HCT116 (cell line): ENCODE measurements at regions of chr2 and their contacts with region 1.

Region 1: DNA sequence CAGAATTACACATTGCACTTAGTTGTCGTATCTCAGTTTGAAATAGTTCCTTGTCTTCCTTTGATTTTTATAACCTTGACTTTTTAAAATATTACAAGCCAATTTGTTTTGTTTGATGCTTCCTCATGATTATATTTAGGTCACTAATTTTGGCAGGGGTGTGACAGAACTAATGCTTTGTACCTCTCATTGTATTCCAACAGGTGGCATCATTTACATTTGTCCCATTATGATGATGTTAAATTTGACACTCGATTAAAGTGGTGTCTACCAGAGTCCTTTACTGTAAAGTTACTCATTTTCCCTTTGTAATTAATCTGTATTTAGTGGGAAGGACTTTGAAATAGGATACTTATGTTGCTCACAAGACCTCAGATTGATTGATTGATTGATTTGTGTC is 21.5 kb upstream of the MFSD2B start:
- DNase-seq: no peak
- ATAC-seq: peak; percentile 78
- H3K4me3 ChIP-seq: no peak overlapping the region
- H3K27ac ChIP-seq: no peak overlapping the region
- H3K4me1 ChIP-seq: no peaks in the 10 kb centered on the region
- H3K27me3 ChIP-seq: no peaks in the 10 kb centered on the region
- CTCF ChIP-seq: peak; percentile 39 to 57 (median 56); a peak in 4 of 6 replicates
- POLR2A ChIP-seq: no peak
- RAD21 ChIP-seq: peak; percentile 66

Region 2: DNA sequence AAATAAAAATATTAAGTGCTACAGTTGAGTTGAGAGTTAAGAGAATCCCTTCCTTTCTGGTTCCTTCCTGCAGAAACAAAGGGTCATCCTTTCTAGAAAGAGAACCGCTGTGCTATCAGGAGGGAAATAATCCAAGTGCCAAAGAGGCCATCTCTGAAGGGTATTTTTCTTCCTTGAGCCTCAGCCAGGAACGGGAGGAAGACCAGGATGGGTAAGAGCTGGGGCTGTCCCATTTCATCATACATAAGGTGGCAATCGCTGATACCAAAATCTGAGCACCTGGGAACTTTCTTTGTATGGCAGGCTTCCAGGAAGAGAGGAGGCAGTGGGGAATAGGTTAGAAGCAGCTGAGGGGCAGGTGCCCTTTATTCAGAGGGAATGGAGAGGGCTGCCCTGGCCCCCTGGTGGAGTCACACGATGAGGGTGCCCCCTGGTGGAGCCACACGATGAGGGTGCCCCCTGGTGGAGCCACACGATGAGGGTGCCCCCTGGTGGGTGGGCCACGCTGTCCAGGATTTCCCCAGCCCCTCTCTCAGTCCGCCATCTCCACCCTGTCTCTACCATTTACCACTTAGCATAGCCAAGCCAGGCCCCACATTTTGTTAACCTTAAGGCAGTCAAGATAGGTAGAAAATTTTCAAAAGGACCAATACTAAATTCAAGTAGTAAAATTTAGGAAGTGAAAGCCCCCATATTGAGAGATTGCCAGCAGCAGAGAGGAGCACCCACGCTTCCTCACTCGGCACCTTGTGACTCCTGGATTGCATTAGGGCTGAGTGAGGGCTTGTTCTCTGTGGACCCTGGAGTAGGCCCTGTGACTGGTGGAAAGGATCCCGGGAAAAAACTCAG is 176.0 kb after region 1 on chr2:
- CTCF ChIA-PET with region 1: no interaction called
- POLR2A ChIA-PET with region 1: no interaction called
- RAD21 ChIA-PET with region 1: no interaction called
- intact Hi-C with region 1: loop called (anchors 10 kb)
- DNase-seq: peak; percentile 22
- ATAC-seq: peak; percentile 86
- H3K4me3 ChIP-seq: no peak overlapping the region
- H3K27ac ChIP-seq: no peak overlapping the region
- H3K4me1 ChIP-seq: no peaks in the 10 kb centered on the region
- H3K27me3 ChIP-seq: no peaks in the 10 kb centered on the region
- CTCF ChIP-seq: peak; percentile 90 to 99 (median 93)
- POLR2A ChIP-seq: no peak
- RAD21 ChIP-seq: peak; percentile 83